IMR-90 (cell line): ENCODE measurements at regions of chr1 and their contacts with region 1.

Region 1: DNA sequence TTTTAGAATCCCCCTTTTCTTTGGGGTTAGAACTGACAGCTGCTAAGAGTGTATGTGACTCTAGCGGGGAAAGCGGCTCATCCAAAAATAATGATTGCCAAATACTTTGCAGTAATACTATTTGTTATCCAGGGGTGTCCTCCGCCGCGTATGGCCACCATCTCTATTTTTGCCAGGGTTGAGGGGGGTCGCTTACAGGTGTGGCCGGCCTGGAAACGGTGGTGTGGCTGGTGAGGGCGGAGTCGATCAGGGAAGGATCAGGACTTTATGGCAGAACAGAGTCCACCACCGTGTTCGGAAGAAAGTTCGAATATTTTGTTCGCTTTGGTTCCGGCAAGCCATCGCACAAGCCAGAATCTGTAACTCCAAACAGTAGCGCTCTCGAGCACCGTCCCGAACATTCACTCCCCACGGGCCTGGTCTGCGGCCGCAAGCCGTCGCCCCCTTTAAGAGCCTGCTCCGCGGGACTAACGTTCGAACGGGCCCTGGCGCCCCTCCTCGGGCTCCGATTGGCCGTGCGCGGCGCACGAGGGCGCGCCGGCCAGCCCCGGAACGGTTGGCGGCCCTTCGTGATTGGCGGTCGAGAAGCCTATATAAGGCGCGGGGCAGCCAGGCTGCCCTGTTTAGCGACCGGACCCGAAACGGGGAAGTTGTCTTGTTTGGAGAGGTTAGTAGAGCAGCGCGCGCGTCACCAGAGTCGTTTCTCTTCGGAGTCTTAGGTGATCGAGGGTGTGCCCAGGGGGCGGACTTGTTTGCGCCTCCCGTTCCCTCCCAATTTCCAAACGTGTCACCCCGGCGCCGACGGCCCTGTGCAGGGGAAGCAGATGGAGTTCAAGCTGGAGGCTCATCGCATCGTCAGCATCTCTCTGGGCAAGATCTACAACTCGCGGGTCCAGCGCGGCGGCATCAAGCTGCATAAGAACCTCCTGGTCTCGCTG is at the start of gene IER5:
- DNase-seq: peak; percentile 95
- ATAC-seq: peak; percentile 85
- H3K4me3 ChIP-seq: peak within 1 kb of the TSS; percentile 59
- H3K27ac ChIP-seq: peak within 1 kb of the TSS; percentile 86
- H3K4me1 ChIP-seq: peaks cover 3% of the 10 kb centered on the region
- H3K27me3 ChIP-seq: no peaks in the 10 kb centered on the region
- CTCF ChIP-seq: no peak
- POLR2A ChIP-seq: peak; percentile 100
- RAD21 ChIP-seq: peak; percentile 31
- total RNA-seq, gene IER5: 15.8 and 29.4 TPM in 2 replicates

Region 2: DNA sequence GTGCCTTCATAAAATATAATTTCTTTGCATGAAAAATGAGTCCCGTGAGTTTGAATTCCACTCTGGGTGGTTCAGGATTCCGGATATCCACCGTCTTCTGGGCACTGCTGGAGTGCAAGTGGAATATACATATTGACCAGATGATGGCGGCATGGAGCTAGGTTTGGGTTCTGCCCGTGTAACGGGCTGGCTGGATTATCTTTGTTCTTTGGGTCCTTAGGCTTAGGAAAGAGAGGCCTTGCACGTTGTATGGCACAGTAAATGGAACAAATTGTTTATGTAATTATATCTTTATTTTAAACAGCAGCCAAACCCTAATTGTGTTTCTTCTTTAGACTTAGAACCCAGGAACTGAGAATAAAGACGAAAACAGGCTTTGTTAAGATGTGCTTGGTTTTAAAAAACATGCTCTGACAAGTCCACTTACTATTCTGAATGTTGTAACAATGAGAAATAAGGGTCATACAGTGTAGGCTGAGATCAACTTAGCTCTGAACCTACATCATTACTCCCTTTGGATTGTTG is 572.4 kb before region 1 on chr1:
- CTCF ChIA-PET with region 1: no interaction called
- POLR2A ChIA-PET with region 1: no interaction called
- dilution Hi-C with region 1: no loop called
- in situ Hi-C with region 1: loop called (anchors 10 kb)
- intact Hi-C with region 1: no loop called
- DNase-seq: peak; percentile 84
- ATAC-seq: peak; percentile 98
- H3K4me3 ChIP-seq: no peak overlapping the region
- H3K27ac ChIP-seq: peak overlapping the region; percentile 98; the same call in 1 of the 2 replicates
- H3K4me1 ChIP-seq: peaks cover 8% of the 10 kb centered on the region
- H3K27me3 ChIP-seq: no peaks in the 10 kb centered on the region
- CTCF ChIP-seq: peak; percentile 94
- POLR2A ChIP-seq: peak; percentile 56
- RAD21 ChIP-seq: peak; percentile 98

Region 3: DNA sequence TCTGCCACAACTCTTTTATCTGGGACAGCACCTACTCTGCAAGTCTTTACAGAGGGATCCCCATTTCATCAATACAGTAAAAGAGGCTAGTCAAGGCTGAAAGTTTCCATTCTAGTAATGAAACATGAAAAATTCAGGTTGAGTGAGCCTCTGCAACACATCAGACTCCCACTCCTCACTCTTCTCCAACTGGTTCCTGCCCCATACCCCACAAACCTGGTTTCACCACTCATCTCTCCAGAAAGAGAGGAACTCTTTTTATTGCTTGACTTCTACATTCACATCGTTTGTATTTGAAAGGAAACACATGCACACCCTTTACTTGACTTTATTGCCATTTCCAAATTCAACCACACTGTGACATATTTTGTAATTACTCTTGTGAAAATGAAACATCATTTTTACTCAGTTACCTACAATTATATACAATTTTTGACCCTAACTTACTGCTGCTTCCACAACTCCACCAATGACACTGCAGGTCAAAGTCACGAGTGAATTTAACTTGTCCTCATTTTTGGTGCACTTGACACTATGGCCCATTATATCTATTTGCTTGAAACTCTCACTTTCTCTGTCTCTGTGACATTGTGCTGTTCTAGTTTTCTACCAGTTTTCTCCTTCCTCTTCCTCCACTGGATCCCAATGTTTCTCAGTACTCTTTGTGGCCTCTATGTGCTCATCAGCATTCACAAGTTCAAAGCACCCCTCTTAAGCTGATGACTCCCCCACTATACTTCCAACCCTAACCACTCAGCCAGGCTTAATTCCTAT is 73.7 kb before region 1 on chr1:
- CTCF ChIA-PET with region 1: interaction called, 3 read pairs
- POLR2A ChIA-PET with region 1: interaction called, 3 read pairs
- dilution Hi-C with region 1: no loop called
- in situ Hi-C with region 1: no loop called
- intact Hi-C with region 1: loop called (anchors 1 kb)
- DNase-seq: no peak
- ATAC-seq: no peak
- H3K4me3 ChIP-seq: no peak overlapping the region
- H3K27ac ChIP-seq: no peak overlapping the region
- H3K4me1 ChIP-seq: peaks cover 15% of the 10 kb centered on the region
- H3K27me3 ChIP-seq: no peaks in the 10 kb centered on the region
- CTCF ChIP-seq: no peak
- POLR2A ChIP-seq: no peak
- RAD21 ChIP-seq: no peak

Region 4: GRCh38 chr1:181033799-181034451 is 54.4 kb before region 1 on chr1 and contains the start of gene MR1:
- CTCF ChIA-PET with region 1: interaction called, 5 read pairs
- POLR2A ChIA-PET with region 1: no interaction called
- dilution Hi-C with region 1: no loop called
- in situ Hi-C with region 1: no loop called
- intact Hi-C with region 1: loop called (anchors 2 kb)
- DNase-seq: peak; percentile 83
- ATAC-seq: peak; percentile 94
- H3K4me3 ChIP-seq: peak within 1 kb of the TSS; percentile 47
- H3K27ac ChIP-seq: peak within 1 kb of the TSS; percentile 56
- H3K4me1 ChIP-seq: peaks cover 13% of the 10 kb centered on the region
- H3K27me3 ChIP-seq: no peaks in the 10 kb centered on the region
- CTCF ChIP-seq: no peak
- POLR2A ChIP-seq: no peak
- RAD21 ChIP-seq: no peak
- total RNA-seq, gene MR1: 5.0 and 6.1 TPM in 2 replicates

Region 5: GRCh38 chr1:181112071-181112929 is 24.0 kb after region 1 on chr1:
- CTCF ChIA-PET with region 1: no interaction called
- POLR2A ChIA-PET with region 1: no interaction called
- dilution Hi-C with region 1: no loop called
- in situ Hi-C with region 1: no loop called
- intact Hi-C with region 1: loop called (anchors 1 kb)
- DNase-seq: peak; percentile 100
- ATAC-seq: peak; percentile 83
- H3K4me3 ChIP-seq: no peak overlapping the region
- H3K27ac ChIP-seq: peak overlapping the region; percentile 75; the same call in 1 of the 2 replicates
- H3K4me1 ChIP-seq: peaks cover 25% of the 10 kb centered on the region
- H3K27me3 ChIP-seq: no peaks in the 10 kb centered on the region
- CTCF ChIP-seq: no peak
- POLR2A ChIP-seq: 0 out of 2 replicates have a peak, but pooled peaks have one; percentile 21
- RAD21 ChIP-seq: no peak